ENCODE measurements at regions of chr9 and their contacts with region 1.

Region 1: DNA sequence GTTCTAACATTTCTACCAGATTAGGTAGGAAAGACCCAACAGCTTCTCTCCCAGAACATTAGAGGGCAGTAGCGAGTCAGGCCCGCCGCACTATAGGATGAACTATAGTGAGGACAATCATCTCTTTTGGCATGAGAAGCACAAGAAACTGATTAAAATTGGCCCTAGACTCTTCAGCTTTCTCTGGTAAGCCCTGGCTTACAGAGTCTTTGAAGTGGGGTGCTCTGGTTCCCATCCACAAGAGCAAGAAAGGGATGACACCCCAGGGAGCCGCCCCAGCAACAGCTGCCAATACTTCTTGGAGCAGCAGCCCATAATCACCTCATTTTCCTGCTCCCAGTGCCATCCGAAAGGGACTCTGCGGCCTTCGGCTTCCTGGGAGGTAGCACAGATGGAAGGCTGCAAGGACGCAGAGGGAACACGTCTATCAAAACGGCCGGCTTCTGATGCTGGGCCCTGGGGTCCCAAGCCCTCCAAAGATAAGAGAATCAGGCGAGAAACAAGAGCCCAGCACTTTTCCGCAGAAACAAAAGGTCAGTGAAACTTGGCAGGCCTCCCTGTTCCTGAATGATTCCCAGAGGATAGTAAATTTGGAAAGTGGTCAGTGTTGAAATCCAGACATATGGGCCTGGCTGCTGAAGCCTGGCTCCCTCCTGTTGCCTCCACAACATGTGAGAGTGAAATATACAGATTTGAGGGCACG is 69.3 kb downstream of the HSD17B3 start:
- DNase-seq: peak; percentile 67

Region 2: GRCh38 chr9:96199006-96199405 is 33.7 kb before region 1 on chr9:
- CTCF ChIA-PET with region 1: no interaction called
- POLR2A ChIA-PET with region 1: no interaction called
- DNase-seq: no peak

Region 3: GRCh38 chr9:96317335-96317980 is 84.8 kb after region 1 on chr9:
- CTCF ChIA-PET with region 1: interaction called, 17 read pairs
- POLR2A ChIA-PET with region 1: no interaction called
- DNase-seq: peak; percentile 69

Measured in HEK293T (cell line).